ENCODE measurements at regions of chr4 and their contacts with region 1.

Region 1: DNA sequence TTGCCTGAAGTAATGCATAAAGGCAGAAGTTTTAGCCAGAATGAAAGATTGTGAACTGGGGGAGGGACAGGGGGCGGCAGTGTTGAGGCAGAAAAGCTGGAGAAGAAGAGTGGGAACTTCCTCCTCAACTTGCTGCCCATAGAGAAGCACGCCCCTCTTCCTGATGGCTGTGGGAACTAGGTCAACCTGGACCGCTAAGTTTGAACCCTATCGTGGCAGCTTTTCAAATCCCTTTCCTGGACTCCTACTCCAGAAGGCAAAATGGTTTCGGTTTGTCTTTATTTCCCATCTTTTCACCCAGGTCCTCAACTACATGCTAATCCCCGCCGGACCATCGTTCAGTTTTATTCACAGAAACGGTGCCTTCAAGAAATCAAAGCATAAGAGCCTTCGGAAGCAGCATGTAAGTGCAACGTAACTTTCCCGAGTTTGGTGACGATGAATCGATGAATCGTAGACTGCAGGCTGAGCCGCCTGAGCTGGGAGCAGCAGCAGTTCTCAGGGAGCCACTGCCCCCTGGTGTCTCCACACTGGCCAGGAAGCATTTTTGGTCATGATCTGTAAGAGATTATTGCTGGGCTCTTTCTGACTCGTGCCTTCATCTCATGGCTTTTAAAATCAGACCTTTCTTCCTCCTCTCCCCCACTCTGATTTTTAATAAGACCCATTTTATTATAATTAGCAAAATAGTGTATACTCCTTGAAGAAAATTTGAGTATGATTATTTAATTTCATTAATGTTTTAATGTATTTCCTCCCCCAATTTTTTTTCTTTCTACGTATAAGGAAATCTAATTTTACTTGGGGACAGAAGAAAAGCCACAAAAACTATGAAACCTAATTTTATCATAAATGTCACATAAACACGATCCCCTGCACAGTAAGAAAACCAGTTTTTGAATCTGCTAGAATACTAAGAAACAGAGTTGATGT is 21.4 kb downstream of the SPINK2 start:
- DNase-seq: peak; percentile 94
- H3K4me3 Mint-ChIP-seq: peak overlapping the region; percentile 89
- H3K27ac Mint-ChIP-seq: peak overlapping the region; percentile 11
- H3K4me1 Mint-ChIP-seq: peaks cover 20% of the 10 kb centered on the region
- H3K27me3 Mint-ChIP-seq: peaks cover 13% of the 10 kb centered on the region

Region 2: DNA sequence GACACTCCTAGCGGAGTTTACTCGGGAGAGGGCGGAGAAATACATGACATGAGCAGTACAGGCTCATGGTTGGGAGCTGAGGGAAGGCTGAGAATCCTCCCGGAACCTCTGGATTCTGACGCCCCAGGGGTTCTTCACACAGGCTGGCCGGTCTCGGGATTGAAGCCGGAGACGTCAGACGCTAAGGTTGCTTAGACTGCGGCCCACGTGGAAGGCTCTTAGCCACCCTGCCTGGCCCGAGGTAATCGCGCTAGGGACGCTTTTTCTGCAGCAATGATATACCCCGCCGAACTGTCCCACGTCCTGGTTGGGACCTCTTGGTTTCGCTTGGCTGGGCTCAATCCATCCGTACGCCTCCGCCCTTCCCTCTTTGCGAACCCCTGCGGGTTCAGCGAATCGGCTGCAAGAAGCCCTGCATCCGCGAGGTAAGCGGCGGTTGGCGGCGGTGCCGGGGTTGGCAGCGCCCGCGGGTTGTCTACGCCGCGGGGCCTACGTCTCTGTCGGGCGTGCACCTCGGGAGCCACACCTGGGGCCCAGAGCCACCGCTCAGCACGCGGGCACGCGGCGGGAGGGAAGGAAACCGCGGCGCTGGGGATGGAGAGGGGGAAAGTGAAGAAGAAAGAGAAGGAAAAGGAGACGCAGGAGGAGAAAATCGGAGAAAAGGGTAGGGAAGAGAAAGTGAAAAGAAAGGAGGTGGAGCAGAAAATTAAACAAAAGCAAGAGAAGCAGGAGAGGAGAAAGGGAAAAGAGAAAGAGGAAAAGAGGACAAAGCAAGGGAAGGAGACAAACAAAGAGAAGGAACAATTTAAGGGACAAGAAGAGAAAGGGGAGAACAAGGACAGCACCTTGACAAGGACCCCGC is 294.6 kb before region 1 on chr4 and contains the start of gene ARL9:
- intact Hi-C with region 1: loop called (anchors 5 kb)
- DNase-seq: peak; percentile 87
- H3K4me3 Mint-ChIP-seq: peak within 1 kb of the TSS; percentile 87
- H3K27ac Mint-ChIP-seq: peak within 1 kb of the TSS; percentile 60
- H3K4me1 Mint-ChIP-seq: peaks cover 15% of the 10 kb centered on the region
- H3K27me3 Mint-ChIP-seq: peaks cover 13% of the 10 kb centered on the region
- total RNA-seq, gene ARL9: 0.07 TPM in 1 of 2 replicates, not detected in the other

Region 3: GRCh38 chr4:56575820-56576429 is 224.2 kb before region 1 on chr4:
- intact Hi-C with region 1: loop called (anchors 1 kb)
- DNase-seq: no peak
- H3K4me3 Mint-ChIP-seq: no peak overlapping the region
- H3K27ac Mint-ChIP-seq: no peak overlapping the region
- H3K4me1 Mint-ChIP-seq: peaks cover 4% of the 10 kb centered on the region
- H3K27me3 Mint-ChIP-seq: peaks cover 8% of the 10 kb centered on the region

Region 4: DNA sequence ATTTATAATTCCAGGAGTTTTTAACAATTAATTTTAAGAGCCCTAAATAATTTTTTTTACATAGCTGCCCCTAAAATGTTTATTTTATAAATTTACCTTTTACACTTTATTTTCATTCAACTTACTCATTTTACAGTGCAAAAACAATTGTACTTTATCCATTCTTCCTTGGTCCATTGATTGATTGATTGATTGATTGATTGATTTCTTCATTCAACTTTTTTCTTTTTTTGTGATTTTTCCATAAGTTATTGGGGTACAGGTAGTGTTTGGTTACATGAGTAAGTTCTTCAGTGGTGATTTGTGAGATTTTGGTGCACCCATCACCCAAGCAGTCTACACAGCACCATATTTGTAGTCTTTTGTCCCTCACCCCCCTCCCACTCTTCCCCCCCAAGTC is 213.0 kb before region 1 on chr4:
- intact Hi-C with region 1: no loop called
- DNase-seq: no peak
- H3K4me3 Mint-ChIP-seq: no peak overlapping the region
- H3K27ac Mint-ChIP-seq: no peak overlapping the region
- H3K4me1 Mint-ChIP-seq: no peaks in the 10 kb centered on the region
- H3K27me3 Mint-ChIP-seq: peaks cover 1% of the 10 kb centered on the region

Region 5: DNA sequence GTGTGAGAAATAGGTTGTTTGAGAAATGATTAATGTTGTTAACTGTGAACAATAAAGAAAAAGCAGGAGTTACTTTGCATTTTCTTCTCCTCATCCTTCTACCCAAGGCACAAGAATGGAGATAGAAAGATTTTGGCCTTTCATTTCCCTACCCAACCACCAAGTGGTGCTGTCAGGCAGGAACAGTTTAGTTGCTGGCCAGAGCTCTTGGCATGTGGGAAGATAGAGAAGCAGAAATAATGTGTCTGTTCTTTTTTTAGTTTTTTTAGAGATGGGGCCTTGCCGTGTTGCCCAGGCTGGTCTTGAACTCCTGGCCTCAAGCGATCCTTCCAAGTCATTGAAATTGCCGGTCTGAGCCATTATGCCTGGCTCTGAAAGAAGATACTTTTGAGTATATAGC is 131.8 kb before region 1 on chr4:
- intact Hi-C with region 1: loop called (anchors 1 kb)
- DNase-seq: peak; percentile 66
- H3K4me3 Mint-ChIP-seq: no peak overlapping the region
- H3K27ac Mint-ChIP-seq: no peak overlapping the region
- H3K4me1 Mint-ChIP-seq: no peaks in the 10 kb centered on the region
- H3K27me3 Mint-ChIP-seq: peaks cover 18% of the 10 kb centered on the region

Region 6: DNA sequence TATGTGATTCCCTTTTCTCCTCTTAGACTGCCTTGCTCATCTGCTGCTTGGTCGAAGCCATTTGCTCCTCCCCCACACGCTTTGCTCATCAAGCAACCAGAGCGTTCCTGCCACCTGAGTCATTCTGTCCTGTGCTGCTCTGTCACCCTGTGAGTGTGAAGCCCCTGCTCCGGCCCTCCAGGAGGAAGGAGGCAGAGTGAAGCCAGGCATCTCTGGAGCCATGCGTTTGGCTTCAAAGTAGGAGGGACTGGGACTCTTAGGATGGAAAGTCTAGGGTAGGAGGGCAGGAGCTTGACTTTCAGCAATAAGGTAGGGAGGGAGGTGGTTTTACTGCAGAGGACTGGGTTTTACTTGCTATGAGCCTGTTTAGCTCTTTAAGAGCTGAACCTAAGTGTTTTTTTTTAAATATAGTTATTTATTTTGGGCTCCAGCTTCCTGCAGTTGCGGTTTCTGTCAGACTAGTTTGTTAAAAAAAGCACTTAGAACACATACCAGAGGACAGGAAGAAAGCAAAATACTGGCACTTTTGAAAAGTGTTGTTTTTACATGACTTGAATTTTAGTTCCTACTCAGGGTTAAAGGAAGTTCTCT is 42.2 kb before region 1 on chr4:
- intact Hi-C with region 1: loop called (anchors 2 kb)
- DNase-seq: peak; percentile 91
- H3K4me3 Mint-ChIP-seq: peak overlapping the region; percentile 80
- H3K27ac Mint-ChIP-seq: peak overlapping the region; percentile 98
- H3K4me1 Mint-ChIP-seq: peaks cover 47% of the 10 kb centered on the region
- H3K27me3 Mint-ChIP-seq: peaks cover 5% of the 10 kb centered on the region

Region 7: GRCh38 chr4:56786955-56787354 is 13.1 kb before region 1 on chr4:
- intact Hi-C with region 1: no loop called
- DNase-seq: no peak
- H3K4me3 Mint-ChIP-seq: no peak overlapping the region
- H3K27ac Mint-ChIP-seq: no peak overlapping the region
- H3K4me1 Mint-ChIP-seq: no peaks in the 10 kb centered on the region
- H3K27me3 Mint-ChIP-seq: peaks cover 10% of the 10 kb centered on the region

Region 8: DNA sequence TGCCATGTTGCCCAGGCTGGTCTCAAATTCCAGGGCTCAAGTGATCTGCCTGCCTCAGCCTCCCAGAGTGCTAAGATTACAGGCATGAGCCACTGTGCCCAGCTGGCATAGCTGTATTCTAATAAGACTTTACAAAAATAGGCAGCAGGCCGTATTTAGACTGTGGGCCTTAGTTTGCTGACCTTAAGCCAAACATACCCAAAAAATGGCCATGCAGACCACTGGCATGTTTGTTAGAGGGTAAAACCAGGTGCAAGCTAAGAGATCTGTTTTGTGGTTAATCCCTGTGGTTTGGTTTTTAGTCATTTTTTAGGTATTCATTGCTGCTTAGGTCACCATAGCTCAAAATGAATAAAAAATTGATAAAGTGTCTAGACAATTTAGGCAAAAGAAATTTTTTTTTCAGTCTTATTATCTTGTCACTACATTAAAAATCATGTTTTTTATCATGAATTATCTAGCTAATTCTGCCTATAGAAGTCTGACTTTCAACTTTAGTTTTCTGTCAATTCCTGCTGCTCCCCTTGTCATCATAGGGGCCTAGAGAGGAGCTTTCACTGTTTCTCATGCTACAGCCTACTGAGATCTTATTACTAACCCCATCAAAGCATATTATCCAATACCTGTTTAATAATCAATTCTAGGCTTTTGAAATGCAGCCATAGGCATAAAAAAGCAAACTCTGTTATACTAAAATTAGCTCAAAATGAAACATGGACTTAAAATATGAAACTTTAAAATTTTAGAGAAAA is 28.9 kb after region 1 on chr4:
- intact Hi-C with region 1: loop called (anchors 1 kb)
- DNase-seq: no peak
- H3K4me3 Mint-ChIP-seq: no peak overlapping the region
- H3K27ac Mint-ChIP-seq: peak overlapping the region; percentile 43
- H3K4me1 Mint-ChIP-seq: peaks cover 18% of the 10 kb centered on the region
- H3K27me3 Mint-ChIP-seq: peaks cover 11% of the 10 kb centered on the region

Region 9: DNA sequence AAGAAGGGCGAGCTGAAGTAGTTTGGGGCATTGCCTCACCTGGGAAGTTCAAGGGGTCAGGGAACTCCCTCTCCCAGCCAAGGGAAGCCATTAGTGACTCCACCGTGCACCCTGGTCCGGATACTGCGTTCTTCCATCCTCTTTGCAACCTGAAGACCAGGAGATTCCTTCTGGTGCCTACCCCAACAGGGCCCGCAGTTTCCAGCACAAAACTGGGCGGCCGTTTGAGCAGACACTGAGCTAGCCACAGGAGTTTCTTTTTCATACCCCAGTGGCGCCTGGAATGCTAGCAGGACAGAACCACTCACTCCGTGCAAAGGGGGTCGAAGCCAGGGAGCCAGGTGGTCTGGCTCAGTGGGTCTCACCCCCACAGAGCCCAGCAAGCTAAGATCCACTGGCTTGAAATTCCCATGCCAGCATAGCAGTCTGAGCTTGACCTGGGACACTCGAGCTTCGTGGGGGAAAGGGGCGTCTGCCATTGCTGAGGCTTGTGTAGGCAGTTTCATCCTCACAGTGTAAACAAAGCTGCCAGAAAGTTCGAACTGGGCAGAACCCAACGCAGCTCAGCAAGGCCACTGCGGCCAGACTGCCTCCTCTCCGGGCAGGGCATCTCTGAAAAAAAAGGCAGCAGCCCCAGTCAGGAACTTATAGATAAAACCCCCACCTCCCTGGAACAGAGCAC is 1349.5 kb after region 1 on chr4:
- intact Hi-C with region 1: no loop called
- DNase-seq: no peak
- H3K4me3 Mint-ChIP-seq: no peak overlapping the region
- H3K27ac Mint-ChIP-seq: no peak overlapping the region
- H3K4me1 Mint-ChIP-seq: no peaks in the 10 kb centered on the region
- H3K27me3 Mint-ChIP-seq: no peaks in the 10 kb centered on the region